ENCODE measurements at regions of chr5 and their contacts with region 1.

Region 1: GRCh38 chr5:39283231-39283818 is 64.0 kb upstream of the FYB1 start:
- DNase-seq: peak; percentile 9
- H3K4me3 ChIP-seq: no peak overlapping the region
- CTCF ChIP-seq: peak; percentile 57

Region 2: DNA sequence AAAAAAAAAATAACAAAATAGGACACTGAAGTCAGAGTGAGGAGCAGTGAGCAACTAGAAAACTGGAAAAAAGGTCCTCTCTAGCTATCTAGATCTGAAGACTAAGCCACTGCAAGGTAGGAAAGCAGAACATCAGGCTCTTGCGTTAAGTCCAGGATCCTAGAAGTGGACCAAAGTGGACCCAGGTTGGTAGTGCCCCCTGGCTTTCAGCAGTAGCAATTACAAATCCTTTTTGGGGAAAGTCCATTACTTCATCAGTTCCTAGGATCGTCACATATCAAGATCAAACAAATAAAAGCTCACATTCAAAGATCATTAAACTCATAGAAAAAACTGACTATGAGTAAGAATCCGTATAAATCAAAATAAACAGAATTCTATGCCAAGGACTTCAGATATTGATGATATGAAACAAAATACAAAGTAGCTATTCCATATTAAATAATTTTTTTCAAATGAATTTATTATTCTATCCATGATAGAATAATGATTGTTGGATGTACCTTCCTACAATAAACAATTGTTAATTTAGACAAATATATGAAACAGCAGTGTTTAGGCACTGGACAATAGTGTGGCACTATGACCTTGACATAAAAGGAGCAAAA is 202.6 kb before region 1 on chr5:
- CTCF ChIA-PET with region 1: interaction called, 26 read pairs
- POLR2A ChIA-PET with region 1: no interaction called
- DNase-seq: no peak
- H3K4me3 ChIP-seq: no peak overlapping the region
- CTCF ChIP-seq: peak; percentile 62

Region 3: GRCh38 chr5:39143151-39143860 is 140.0 kb before region 1 on chr5:
- CTCF ChIA-PET with region 1: interaction called, 78 read pairs
- POLR2A ChIA-PET with region 1: no interaction called
- DNase-seq: no peak
- H3K4me3 ChIP-seq: no peak overlapping the region
- CTCF ChIP-seq: no peak

Region 4: GRCh38 chr5:39158127-39158593 is 125.2 kb before region 1 on chr5:
- CTCF ChIA-PET with region 1: interaction called, 78 read pairs
- POLR2A ChIA-PET with region 1: no interaction called
- DNase-seq: no peak
- H3K4me3 ChIP-seq: no peak overlapping the region
- CTCF ChIP-seq: no peak

Region 5: GRCh38 chr5:39256477-39257235 is 26.7 kb before region 1 on chr5:
- CTCF ChIA-PET with region 1: interaction called, 10 read pairs
- POLR2A ChIA-PET with region 1: no interaction called
- DNase-seq: peak; percentile 31
- H3K4me3 ChIP-seq: no peak overlapping the region
- CTCF ChIP-seq: no peak

Region 6: DNA sequence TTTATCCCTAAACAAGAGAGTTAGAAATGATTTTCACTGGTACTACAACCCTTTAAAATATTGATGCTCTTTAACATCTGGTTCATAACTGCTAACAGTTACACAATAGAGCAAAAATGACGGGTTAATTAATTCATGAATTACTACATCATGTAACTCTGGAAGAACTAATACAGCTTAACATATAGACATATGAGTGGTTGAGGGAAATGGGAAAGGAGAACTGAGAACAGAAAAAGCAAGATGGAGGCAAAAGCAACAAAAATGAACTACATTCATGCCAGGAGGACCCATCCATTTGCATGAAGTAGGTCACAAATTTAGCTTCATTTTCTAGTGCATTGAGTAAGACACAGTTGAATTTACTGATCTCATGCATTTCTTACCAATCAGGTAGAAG is 19.1 kb after region 1 on chr5:
- CTCF ChIA-PET with region 1: interaction called, 18 read pairs
- POLR2A ChIA-PET with region 1: no interaction called
- DNase-seq: no peak
- H3K4me3 ChIP-seq: no peak overlapping the region
- CTCF ChIP-seq: no peak